ENCODE measurements at regions of chr17 and their contacts with region 1.

Region 1: GRCh38 chr17:43940630-43941029 is 1.6 kb downstream of the PPY start:
- DNase-seq: peak; percentile 16
- H3K4me3 ChIP-seq: no peak overlapping the region
- H3K27ac ChIP-seq: no peak overlapping the region
- H3K4me1 ChIP-seq: no peaks in the 10 kb centered on the region
- H3K27me3 ChIP-seq: no peaks in the 10 kb centered on the region
- CTCF ChIP-seq: peak; percentile 41 to 57
- POLR2A ChIP-seq: no peak

Region 2: GRCh38 chr17:43888548-43888947 is 52.1 kb before region 1 on chr17:
- CTCF ChIA-PET with region 1: no interaction called
- POLR2A ChIA-PET with region 1: no interaction called
- dilution Hi-C with region 1: no loop called
- intact Hi-C with region 1: no loop called
- DNase-seq: no peak
- H3K4me3 ChIP-seq: no peak overlapping the region
- H3K27ac ChIP-seq: no peak overlapping the region
- H3K4me1 ChIP-seq: no peaks in the 10 kb centered on the region
- H3K27me3 ChIP-seq: peaks cover 3% of the 10 kb centered on the region in 2 experiments
- CTCF ChIP-seq: no peak
- POLR2A ChIP-seq: no peak

Region 3: GRCh38 chr17:43927060-43927864 is 13.4 kb before region 1 on chr17:
- CTCF ChIA-PET with region 1: interaction called, 51 read pairs
- POLR2A ChIA-PET with region 1: no interaction called
- dilution Hi-C with region 1: no loop called
- intact Hi-C with region 1: no loop called
- DNase-seq: no peak
- H3K4me3 ChIP-seq: no peak overlapping the region
- H3K27ac ChIP-seq: no peak overlapping the region
- H3K4me1 ChIP-seq: no peaks in the 10 kb centered on the region
- H3K27me3 ChIP-seq: peaks cover 44 to 45% of the 10 kb centered on the region in 2 experiments
- CTCF ChIP-seq: no peak
- POLR2A ChIP-seq: no peak

Region 4: DNA sequence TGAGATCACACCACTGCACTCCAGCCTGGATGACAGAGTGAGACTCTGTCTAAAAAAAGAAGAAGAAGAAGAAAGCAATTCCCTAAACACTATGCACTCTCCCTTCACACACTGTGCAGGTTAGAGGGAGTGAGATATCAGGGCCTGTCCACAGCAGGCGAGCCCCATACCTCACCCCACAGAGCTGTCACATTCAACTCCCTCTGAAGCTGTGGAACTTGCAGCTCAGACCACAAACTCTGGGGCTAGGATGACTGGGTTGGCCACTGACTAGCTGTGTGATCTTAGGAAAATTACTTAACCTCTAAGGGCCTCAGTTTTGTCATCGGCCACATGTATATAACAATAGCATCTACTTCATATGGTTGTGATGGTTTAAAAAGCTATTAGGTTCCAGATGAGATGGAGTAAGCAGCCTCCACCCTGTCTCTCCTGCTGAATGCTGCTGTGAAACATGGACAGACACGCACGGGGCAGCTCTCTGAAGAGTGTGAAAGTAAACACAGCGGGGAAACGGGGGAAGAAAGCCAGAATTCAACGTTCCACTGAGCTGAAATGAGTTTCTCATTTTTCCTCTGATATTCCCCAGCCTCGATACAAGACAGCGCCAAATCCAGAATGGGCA is 26.7 kb after region 1 on chr17:
- CTCF ChIA-PET with region 1: interaction called, 12 read pairs
- POLR2A ChIA-PET with region 1: no interaction called
- dilution Hi-C with region 1: no loop called
- intact Hi-C with region 1: no loop called
- DNase-seq: no peak
- H3K4me3 ChIP-seq: no peak overlapping the region
- H3K27ac ChIP-seq: no peak overlapping the region
- H3K4me1 ChIP-seq: no peaks in the 10 kb centered on the region
- H3K27me3 ChIP-seq: peaks cover 3 to 12% of the 10 kb centered on the region in 2 experiments
- CTCF ChIP-seq: no peak
- POLR2A ChIP-seq: no peak

Region 5: DNA sequence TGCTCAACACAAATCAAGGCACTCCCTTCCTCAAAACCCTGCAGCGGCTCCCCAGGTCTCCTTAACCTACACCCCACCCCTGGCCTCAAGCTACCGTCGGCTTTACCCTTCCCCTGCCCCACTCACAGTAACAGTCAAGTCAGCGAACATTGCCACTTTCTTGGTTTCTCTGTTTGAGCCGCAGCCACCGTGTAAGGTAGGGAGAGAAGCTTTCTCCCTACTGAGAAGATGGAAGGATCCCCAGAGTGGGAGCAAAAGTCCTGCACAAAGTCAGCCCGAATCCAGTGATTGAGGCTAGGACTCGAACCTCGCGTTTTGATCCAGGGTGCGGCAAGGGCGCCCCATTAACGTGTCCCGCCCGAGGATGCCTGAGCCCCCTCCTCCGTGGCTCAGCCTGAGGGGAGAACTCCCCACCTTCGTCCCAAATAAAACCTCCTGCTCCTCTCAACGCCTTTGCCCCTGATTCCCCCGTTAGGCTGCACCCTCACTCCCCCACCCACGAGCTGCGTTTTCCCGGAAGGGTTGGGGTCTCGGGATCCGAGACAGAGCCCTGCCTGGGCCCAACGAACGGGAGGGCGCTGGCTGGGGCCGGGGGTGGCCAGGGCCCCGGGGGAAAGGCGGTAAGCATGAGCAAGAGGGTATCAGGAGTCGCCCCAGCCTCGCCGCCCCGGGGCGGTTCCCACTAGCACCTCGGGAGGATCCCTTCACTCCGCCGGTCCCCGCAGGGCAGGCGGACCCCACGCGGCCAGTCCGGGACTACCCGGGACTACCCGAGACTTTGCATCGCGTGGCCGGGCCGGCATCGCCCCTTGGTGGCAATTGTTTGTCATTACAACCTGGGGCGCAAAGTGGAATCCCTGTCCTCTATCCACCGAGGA is 53.9 kb after region 1 on chr17:
- CTCF ChIA-PET with region 1: interaction called, 182 read pairs
- POLR2A ChIA-PET with region 1: no interaction called
- dilution Hi-C with region 1: no loop called
- intact Hi-C with region 1: loop called (anchors 1 kb)
- DNase-seq: peak; percentile 57
- H3K4me3 ChIP-seq: peak overlapping the region in 2 of 3 experiments; percentile 1 to 38
- H3K27ac ChIP-seq: no peak overlapping the region
- H3K4me1 ChIP-seq: peaks cover 5% of the 10 kb centered on the region
- H3K27me3 ChIP-seq: peaks cover 0 to 3% of the 10 kb centered on the region in 2 experiments
- CTCF ChIP-seq: peak; percentile 80 to 89
- POLR2A ChIP-seq: no peak

Region 6: DNA sequence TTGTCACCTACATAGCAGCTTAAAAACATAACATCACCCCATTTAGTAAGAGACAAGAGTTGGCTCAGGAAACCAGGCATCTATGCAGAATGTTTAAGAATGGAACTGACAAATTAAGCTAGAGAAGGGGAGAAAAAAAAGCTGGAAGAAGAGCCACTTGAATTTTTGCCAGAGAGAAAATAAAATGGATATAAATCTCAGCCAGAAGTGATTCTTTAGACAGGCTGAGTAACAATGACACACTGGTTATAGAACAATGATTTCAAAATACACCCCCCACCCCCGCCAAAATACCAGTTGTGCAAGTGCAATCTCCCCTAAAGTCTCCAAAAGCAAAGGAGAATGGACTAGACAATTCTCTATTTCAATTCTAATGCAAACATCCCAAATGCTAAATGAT is 103.4 kb after region 1 on chr17:
- CTCF ChIA-PET with region 1: interaction called, 108 read pairs
- POLR2A ChIA-PET with region 1: no interaction called
- dilution Hi-C with region 1: no loop called
- intact Hi-C with region 1: loop called (anchors 1 kb)
- DNase-seq: peak; percentile 11
- H3K4me3 ChIP-seq: no peak overlapping the region
- H3K27ac ChIP-seq: no peak overlapping the region
- H3K4me1 ChIP-seq: peaks cover 9% of the 10 kb centered on the region
- H3K27me3 ChIP-seq: no peaks in the 10 kb centered on the region
- CTCF ChIP-seq: no peak
- POLR2A ChIP-seq: no peak

Region 7: GRCh38 chr17:44170499-44171201 is 230.0 kb after region 1 on chr17 and contains the start of gene ASB16:
- CTCF ChIA-PET with region 1: interaction called, 69 read pairs
- POLR2A ChIA-PET with region 1: no interaction called
- dilution Hi-C with region 1: no loop called
- intact Hi-C with region 1: loop called (anchors 1 kb)
- DNase-seq: no peak
- H3K4me3 ChIP-seq: no peak within 1 kb of the TSS
- H3K27ac ChIP-seq: no peak within 1 kb of the TSS
- H3K4me1 ChIP-seq: no peaks in the 10 kb centered on the region
- H3K27me3 ChIP-seq: no peaks in the 10 kb centered on the region
- CTCF ChIP-seq: no peak
- POLR2A ChIP-seq: no peak
- total RNA-seq, gene ASB16: not detected in 2 replicates